ENCODE measurements at regions of chr3 and their contacts with region 1.

Region 1: GRCh38 chr3:128133273-128134084 is 9.9 kb upstream of the RUVBL1 start:
- DNase-seq: peak in 5 of 9 donors; percentile 14 to 34 (median 23)
- ATAC-seq: peak; percentile 76
- H3K4me3 ChIP-seq: no peak overlapping the region
- H3K4me3 Mint-ChIP-seq: no peak overlapping the region
- H3K27ac ChIP-seq: no peak overlapping the region
- H3K27ac Mint-ChIP-seq: no peak overlapping the region
- H3K4me1 ChIP-seq: no peaks in the 10 kb centered on the region
- H3K4me1 Mint-ChIP-seq: no peaks in the 10 kb centered on the region
- H3K27me3 ChIP-seq: no peaks in the 10 kb centered on the region
- H3K27me3 Mint-ChIP-seq: peaks cover 0 to 34% (median 3%) of the 10 kb centered on the region in 5 donors

Region 2: GRCh38 chr3:128011140-128011539 is 122.3 kb before region 1 on chr3:
- CTCF ChIA-PET with region 1: no interaction called
- POLR2A ChIA-PET with region 1: no interaction called
- intact Hi-C with region 1: loop called in 1 of 2 experiments (anchors 2 kb)
- DNase-seq: no peak
- ATAC-seq: no peak
- H3K4me3 ChIP-seq: no peak overlapping the region
- H3K4me3 Mint-ChIP-seq: no peak overlapping the region
- H3K27ac ChIP-seq: no peak overlapping the region
- H3K27ac Mint-ChIP-seq: no peak overlapping the region
- H3K4me1 ChIP-seq: no peaks in the 10 kb centered on the region
- H3K4me1 Mint-ChIP-seq: peaks cover 0 to 4% (median 4%) of the 10 kb centered on the region in 7 donors
- H3K27me3 ChIP-seq: no peaks in the 10 kb centered on the region
- H3K27me3 Mint-ChIP-seq: peaks cover 0 to 16% (median 4%) of the 10 kb centered on the region in 5 donors

Region 3: DNA sequence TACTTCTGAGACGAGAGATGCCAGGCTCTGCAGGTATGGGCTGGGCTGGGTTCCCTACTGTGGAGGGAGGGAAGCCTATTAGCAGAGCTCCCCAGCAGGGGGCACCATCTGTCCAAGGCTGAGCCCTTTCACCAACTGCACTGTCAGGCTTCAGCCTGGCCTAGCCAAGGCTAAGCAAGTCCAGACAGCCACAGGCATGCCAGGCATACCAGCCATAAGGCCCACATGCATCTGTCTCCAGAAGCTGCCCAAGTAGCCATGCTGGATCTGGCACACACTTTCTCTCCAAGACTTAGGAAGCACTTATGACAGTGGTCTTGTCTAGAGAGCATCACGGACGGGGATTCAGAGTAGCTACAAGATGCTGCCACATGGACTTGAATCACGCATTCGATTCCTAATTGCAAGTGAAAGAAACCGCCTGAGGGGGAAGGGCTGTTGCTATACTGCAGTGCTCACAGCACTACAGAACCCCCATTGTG is 38.2 kb before region 1 on chr3:
- CTCF ChIA-PET with region 1: interaction called, 31 read pairs
- POLR2A ChIA-PET with region 1: no interaction called
- intact Hi-C with region 1: loop called (anchors 1 kb)
- DNase-seq: peak; percentile 51 to 79 (median 73)
- ATAC-seq: peak; percentile 99
- H3K4me3 ChIP-seq: no peak overlapping the region
- H3K4me3 Mint-ChIP-seq: no peak overlapping the region
- H3K27ac ChIP-seq: no peak overlapping the region
- H3K27ac Mint-ChIP-seq: peak overlapping the region in 4 of 9 donors; percentile 16 to 68 (median 36)
- H3K4me1 ChIP-seq: no peaks in the 10 kb centered on the region
- H3K4me1 Mint-ChIP-seq: peaks cover 1 to 18% (median 6%) of the 10 kb centered on the region in 7 donors
- H3K27me3 ChIP-seq: no peaks in the 10 kb centered on the region
- H3K27me3 Mint-ChIP-seq: no peaks in the 10 kb centered on the region

Measured in naive thymus-derived CD4-positive, alpha-beta T cell (primary cell).